K562 (cell line): ENCODE measurements at regions of chr11 and their contacts with region 1.

Region 1: GRCh38 chr11:69296890-69297786 is 3.2 kb downstream of the MYEOV start:
- DNase-seq: peak; percentile 85 to 96 (median 88)
- ATAC-seq: peak; percentile 64
- H3K4me3 ChIP-seq: peak overlapping the region; percentile 69
- H3K27ac ChIP-seq: peak overlapping the region; percentile 94
- H3K4me1 ChIP-seq: peaks cover 70 to 84% of the 10 kb centered on the region in 2 experiments
- H3K27me3 ChIP-seq: no peaks in the 10 kb centered on the region
- CTCF ChIP-seq: no peak
- EP300 ChIP-seq: peak; percentile 70
- POLR2A ChIP-seq: peak; percentile 67; the same call in 1 of the 2 replicates
- RAD21 ChIP-seq: peak; percentile 11 to 24; a peak in 2 of 4 replicates

Region 2: DNA sequence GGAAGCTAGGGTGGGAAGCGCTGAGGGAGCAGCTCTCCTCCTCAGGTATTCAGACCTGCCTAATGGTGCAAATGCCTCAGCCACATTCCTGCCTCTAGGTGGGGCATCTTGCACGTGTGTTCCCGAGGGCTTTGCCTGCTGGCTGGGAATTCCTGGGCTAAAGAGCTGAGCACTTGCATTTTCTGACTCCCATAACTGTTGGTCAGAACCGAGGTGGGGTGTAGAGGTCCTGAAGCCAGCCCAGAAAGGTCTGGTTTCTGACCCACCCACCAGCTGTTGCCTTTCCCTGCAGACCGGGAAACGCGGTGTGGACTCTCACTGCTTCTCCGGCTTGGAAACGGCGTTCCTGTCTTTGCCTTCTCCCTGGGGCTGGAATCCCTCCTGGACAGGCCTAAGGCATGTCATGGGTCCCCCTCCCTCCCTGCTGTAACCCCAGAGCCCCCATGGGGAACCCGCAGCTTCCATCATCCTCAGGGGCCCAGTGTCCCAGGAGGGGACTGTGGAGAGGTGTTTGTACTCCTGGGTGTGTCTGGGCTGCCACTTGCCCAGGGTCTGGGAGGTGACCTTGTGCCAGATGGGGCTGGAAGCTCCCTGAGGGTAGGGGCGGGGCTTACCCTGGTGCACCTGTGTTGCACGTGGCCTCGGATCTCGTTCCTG is 165.4 kb before region 1 on chr11:
- CTCF ChIA-PET with region 1: no interaction called
- POLR2A ChIA-PET with region 1: no interaction called
- in situ Hi-C with region 1: no loop called
- intact Hi-C with region 1: loop called (anchors 10 kb)
- DNase-seq: peak; percentile 59 to 72 (median 62)
- ATAC-seq: peak; percentile 91
- H3K4me3 ChIP-seq: no peak overlapping the region
- H3K27ac ChIP-seq: no peak overlapping the region
- H3K4me1 ChIP-seq: peaks cover 3 to 6% of the 10 kb centered on the region in 2 experiments; a peak in 2 of 5 replicates
- H3K27me3 ChIP-seq: peaks cover 0 to 8% of the 10 kb centered on the region in 2 experiments; a peak in 3 of 5 replicates
- CTCF ChIP-seq: peak; percentile 77 to 89 (median 86)
- EP300 ChIP-seq: no peak
- POLR2A ChIP-seq: no peak
- RAD21 ChIP-seq: peak; percentile 66 to 84

Region 3: GRCh38 chr11:69368119-69368881 is 71.2 kb after region 1 on chr11:
- CTCF ChIA-PET with region 1: no interaction called
- POLR2A ChIA-PET with region 1: no interaction called
- in situ Hi-C with region 1: no loop called
- intact Hi-C with region 1: loop called (anchors 10 kb)
- DNase-seq: no peak
- ATAC-seq: no peak
- H3K4me3 ChIP-seq: no peak overlapping the region
- H3K27ac ChIP-seq: no peak overlapping the region
- H3K4me1 ChIP-seq: peaks cover 0 to 3% of the 10 kb centered on the region in 2 experiments; a peak in 2 of 5 replicates
- H3K27me3 ChIP-seq: no peaks in the 10 kb centered on the region
- CTCF ChIP-seq: no peak
- EP300 ChIP-seq: no peak
- POLR2A ChIP-seq: no peak
- RAD21 ChIP-seq: no peak

Region 4: DNA sequence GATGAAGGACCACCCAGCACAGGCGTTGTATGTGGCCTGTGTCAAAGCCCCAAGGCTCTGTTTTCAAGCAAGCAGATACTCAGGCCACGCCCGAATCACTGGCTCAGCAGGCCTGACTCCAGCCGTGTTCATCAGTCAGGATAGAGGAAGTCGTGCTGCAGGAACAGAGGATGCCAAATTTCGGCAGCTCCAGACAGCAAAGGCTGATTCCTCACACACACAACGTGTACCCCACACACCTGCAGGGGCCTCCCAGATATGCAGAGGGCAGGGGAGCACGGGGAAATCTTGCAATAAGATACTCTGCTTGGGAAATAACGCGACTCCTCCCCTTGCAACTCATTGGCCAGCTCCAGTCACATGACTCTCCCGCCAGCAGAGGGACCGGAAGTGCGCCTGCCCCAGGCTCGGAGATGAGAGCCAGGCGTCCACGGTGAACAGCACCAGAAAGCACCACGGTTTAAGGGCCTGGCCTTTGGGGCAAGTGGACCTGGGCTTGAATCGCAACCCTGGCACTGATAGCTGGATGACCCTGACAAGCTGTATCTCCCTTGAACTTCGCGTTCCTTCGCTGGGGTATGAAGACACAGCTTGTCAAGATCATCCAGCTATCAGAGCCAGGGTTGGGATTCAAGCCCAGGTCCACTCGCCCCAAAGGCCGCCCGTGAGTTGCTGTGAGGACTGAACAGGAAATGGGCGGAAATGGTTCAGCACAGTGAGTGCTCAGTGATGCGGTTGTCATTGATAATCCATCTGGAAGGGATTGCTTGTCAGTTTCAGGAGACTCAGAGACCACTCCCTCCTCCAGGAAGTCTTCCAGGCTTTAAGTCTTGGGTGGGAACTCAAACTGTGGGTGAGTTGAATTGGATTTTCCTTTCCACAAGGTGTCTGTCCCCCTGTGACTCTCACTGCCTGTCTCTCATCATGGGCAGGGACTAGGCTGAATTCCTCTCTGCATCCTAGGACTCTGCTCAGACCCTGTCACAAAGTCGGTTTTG is 85.3 kb after region 1 on chr11:
- CTCF ChIA-PET with region 1: no interaction called
- POLR2A ChIA-PET with region 1: interaction called, 4 read pairs
- in situ Hi-C with region 1: no loop called
- intact Hi-C with region 1: loop called (anchors 5 kb)
- DNase-seq: peak; percentile 92 to 98 (median 98)
- ATAC-seq: peak; percentile 89
- H3K4me3 ChIP-seq: peak overlapping the region; percentile 51
- H3K27ac ChIP-seq: peak overlapping the region; percentile 84
- H3K4me1 ChIP-seq: peaks cover 24 to 56% of the 10 kb centered on the region in 2 experiments
- H3K27me3 ChIP-seq: no peaks in the 10 kb centered on the region
- CTCF ChIP-seq: no peak
- EP300 ChIP-seq: peak; percentile 22; the same call in 1 of the 2 replicates
- POLR2A ChIP-seq: peak; percentile 87
- RAD21 ChIP-seq: peak in 1 of 2 experiments; percentile 5; a peak in 2 of 4 replicates

Region 5: GRCh38 chr11:69403556-69404215 is 106.5 kb after region 1 on chr11:
- CTCF ChIA-PET with region 1: no interaction called
- POLR2A ChIA-PET with region 1: interaction called, 5 read pairs
- in situ Hi-C with region 1: no loop called
- intact Hi-C with region 1: loop called (anchors 10 kb)
- DNase-seq: no peak
- ATAC-seq: no peak
- H3K4me3 ChIP-seq: no peak overlapping the region
- H3K27ac ChIP-seq: no peak overlapping the region; the same call in 2 of the 3 replicates
- H3K4me1 ChIP-seq: peaks cover 42 to 71% of the 10 kb centered on the region in 2 experiments
- H3K27me3 ChIP-seq: no peaks in the 10 kb centered on the region
- CTCF ChIP-seq: no peak
- EP300 ChIP-seq: no peak
- POLR2A ChIP-seq: no peak
- RAD21 ChIP-seq: no peak

Region 6: DNA sequence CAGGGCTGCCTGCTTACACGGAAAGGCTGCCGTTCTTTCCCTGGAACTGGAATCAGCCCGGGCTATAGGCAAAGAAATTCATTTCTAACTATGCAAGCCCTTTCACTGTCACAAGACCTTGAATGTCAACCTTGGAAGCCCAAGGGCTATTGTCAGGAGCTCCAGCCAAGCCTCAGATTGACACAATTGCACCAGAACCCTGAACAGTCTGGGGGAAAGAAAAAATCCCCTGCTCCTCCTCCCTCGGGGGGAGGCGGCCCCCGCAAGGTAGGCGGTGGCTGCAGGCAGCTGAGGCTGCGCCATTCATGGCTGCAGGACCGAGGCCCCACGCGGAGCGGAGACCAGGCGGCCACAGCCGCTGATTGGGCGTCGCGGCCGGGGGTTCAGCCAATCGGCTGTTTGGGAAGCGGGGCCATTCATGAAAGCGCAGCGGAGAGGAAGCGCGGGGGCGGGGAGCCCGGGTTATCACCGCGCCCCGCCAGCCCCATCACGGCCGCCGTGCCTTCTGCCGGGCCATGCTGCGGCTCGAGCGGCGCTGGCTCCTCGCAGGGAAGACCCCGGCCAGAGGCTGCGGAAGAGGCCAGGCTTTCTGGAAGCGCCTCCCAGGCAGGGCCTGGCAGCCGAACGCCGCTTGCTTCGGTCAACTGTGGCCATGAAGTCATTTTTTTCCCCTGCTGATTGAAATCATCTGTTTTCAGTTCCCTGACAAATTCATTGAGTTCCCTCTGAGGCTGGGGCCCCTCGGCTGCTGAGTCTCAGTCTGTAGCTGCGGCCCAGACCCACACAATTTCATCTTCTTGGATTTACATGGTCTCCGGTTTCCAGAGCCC is 146.2 kb after region 1 on chr11:
- CTCF ChIA-PET with region 1: no interaction called
- POLR2A ChIA-PET with region 1: interaction called, 5 read pairs
- in situ Hi-C with region 1: no loop called
- intact Hi-C with region 1: loop called (anchors 2 kb)
- DNase-seq: peak; percentile 99
- ATAC-seq: peak; percentile 94
- H3K4me3 ChIP-seq: peak overlapping the region; percentile 35
- H3K27ac ChIP-seq: peak overlapping the region; percentile 95
- H3K4me1 ChIP-seq: peaks cover 54 to 61% of the 10 kb centered on the region in 2 experiments
- H3K27me3 ChIP-seq: no peaks in the 10 kb centered on the region
- CTCF ChIP-seq: no peak
- EP300 ChIP-seq: no peak
- POLR2A ChIP-seq: peak; percentile 93
- RAD21 ChIP-seq: no peak; a peak in 1 of 4 replicates

Region 7: GRCh38 chr11:69642913-69643632 is 345.9 kb after region 1 on chr11:
- CTCF ChIA-PET with region 1: interaction called, 11 read pairs
- POLR2A ChIA-PET with region 1: interaction called, 5 read pairs
- in situ Hi-C with region 1: loop called (anchors 5 kb)
- intact Hi-C with region 1: loop called (anchors 2 kb)
- DNase-seq: peak; percentile 81 to 88 (median 84)
- ATAC-seq: peak; percentile 88
- H3K4me3 ChIP-seq: peak overlapping the region; percentile 54
- H3K27ac ChIP-seq: peak overlapping the region; percentile 66; the same call in 1 of the 3 replicates
- H3K4me1 ChIP-seq: peaks cover 8 to 80% of the 10 kb centered on the region in 2 experiments; a peak in 4 of 5 replicates
- H3K27me3 ChIP-seq: peaks cover 9 to 13% of the 10 kb centered on the region in 2 experiments
- CTCF ChIP-seq: peak; percentile 90 to 94 (median 92)
- EP300 ChIP-seq: no peak
- POLR2A ChIP-seq: no peak
- RAD21 ChIP-seq: peak; percentile 98